Heart right ventricle (tissue), 16 donors: ENCODE measurements at regions of chr1 and their contacts with region 1.

Region 1: DNA sequence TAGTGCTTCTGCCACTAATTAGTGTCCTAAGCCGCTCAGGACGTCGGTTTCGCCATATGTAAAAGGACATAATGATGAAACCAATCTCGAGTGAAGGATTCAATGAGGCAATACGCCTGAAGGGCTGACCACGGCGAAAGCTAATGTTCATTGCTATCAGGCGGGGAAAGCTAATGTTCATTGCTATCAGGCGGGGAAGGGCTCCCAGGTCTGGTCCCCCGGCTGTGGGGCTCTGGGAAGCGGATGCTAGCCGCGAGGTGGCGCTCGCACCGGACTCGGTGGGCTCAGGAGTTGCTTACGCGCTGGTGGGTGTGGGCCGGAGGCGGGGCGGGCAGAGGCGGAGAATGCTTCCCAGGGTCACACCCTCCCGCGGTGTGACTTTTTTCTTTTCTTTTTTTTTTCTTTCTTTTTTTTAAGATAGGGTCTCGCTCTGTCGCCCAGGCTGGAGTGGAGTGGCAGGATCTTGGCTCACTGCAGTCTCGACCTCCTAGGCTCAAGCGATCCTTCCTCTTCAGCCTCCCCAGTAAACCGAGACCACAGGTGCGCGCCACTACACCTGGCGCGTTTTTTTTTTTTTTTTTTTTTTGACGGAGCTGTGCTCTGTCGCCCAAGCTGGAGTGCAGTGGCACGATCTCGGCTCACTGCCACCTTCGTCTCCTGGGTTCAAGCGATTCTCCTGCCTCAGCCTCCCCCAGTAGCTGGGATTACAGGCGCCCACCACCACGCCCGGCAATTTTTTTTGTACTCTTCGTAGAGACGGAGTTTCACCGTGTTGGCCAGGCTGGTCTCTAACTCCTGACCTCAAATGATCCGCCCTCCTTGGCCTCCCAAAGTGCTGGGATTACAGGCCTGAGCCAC is 1.1 kb upstream of the PEAR1 start:
- DNase-seq: peak; percentile 94 to 95
- ATAC-seq: peak; percentile 84 to 91 (median 88)
- H3K4me3 ChIP-seq: peak overlapping the region; percentile 10 to 82 (median 68)
- H3K27ac ChIP-seq: peak overlapping the region; percentile 9 to 98 (median 93)
- H3K4me1 ChIP-seq: peaks cover 12 to 56% (median 45%) of the 10 kb centered on the region in 9 donors
- H3K27me3 ChIP-seq: peaks cover 0 to 43% (median 9%) of the 10 kb centered on the region in 7 donors
- CTCF ChIP-seq: peak; percentile 82 to 98 (median 89)

Region 2: GRCh38 chr1:156659994-156660751 is 232.2 kb before region 1 on chr1:
- intact Hi-C with region 1: loop called in 1 of 10 experiments (anchors 10 kb)
- DNase-seq: peak; percentile 97 to 98
- ATAC-seq: peak; percentile 82 to 91 (median 85)
- H3K4me3 ChIP-seq: peak overlapping the region in 8 of 10 donors; percentile 18 to 46 (median 39)
- H3K27ac ChIP-seq: peak overlapping the region; percentile 68 to 99 (median 96)
- H3K4me1 ChIP-seq: peaks cover 54 to 85% (median 80%) of the 10 kb centered on the region in 9 donors
- H3K27me3 ChIP-seq: peaks cover 0 to 28% (median 18%) of the 10 kb centered on the region in 7 donors
- CTCF ChIP-seq: peak; percentile 93 to 100 (median 99)

Region 3: DNA sequence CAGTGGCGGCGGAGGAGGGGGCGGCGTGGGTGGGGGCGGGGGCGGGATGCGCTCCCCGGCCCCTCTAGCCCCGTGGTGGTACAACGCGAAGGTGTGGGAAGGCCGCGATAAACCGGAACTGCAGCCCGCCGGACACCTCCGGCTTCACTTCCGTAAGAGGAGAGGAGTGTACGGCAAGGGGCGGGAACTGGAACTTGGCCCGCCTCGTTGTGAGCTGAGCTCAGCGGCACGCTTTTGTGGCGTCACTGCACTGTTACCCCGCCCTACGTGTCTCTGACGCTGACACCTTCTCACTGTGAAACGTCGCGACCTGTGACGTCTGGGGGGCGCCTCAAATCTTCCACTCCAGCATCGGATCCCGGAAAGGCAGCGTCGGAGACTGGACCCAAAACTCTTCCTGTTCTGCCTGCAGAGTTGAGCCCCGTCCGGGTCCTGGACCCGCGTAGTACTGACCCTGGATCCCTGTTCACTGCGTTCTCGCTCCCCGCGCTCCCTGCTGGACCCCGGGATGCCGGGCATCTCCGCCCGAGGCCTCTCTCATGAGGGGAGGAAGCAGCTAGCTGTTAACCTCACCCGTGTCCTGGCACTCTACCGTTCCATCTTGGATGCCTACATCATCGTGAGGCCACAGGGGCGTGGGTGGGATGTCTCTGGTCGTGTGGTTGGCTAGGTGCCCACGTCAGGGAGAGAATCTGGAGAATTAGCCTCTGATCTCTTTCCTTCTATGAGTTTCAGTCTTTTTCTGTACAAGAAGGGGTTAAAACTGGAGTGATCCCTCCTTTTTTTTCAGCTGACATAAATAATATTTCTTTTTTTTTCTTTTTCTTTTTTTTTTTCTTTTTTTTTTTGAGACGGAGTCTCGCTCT is 163.6 kb before region 1 on chr1 and contains the start of gene ISG20L2:
- intact Hi-C with region 1: loop called in 6 of 10 experiments (anchors 2 to 10 kb)
- DNase-seq: peak; percentile 94 to 96
- ATAC-seq: peak; percentile 95 to 97 (median 96)
- H3K4me3 ChIP-seq: peak within 1 kb of the TSS; percentile 57 to 86 (median 78)
- H3K27ac ChIP-seq: peak within 1 kb of the TSS; percentile 92 to 98 (median 95)
- H3K4me1 ChIP-seq: peaks cover 21 to 52% (median 44%) of the 10 kb centered on the region in 9 donors
- H3K27me3 ChIP-seq: no peaks in the 10 kb centered on the region
- CTCF ChIP-seq: no peak
- total RNA-seq, gene ISG20L2: 10.5 to 17.5 (median 15.2) TPM

Region 4: GRCh38 chr1:156838981-156839410 is 53.4 kb before region 1 on chr1:
- intact Hi-C with region 1: loop called in 3 of 10 experiments (anchors 1 to 10 kb)
- DNase-seq: no peak
- ATAC-seq: peak; percentile 28 to 67 (median 49)
- H3K4me3 ChIP-seq: no peak overlapping the region
- H3K27ac ChIP-seq: no peak overlapping the region
- H3K4me1 ChIP-seq: peaks cover 0 to 5% (median 0%) of the 10 kb centered on the region in 9 donors
- H3K27me3 ChIP-seq: peaks cover 0 to 67% (median 45%) of the 10 kb centered on the region in 7 donors
- CTCF ChIP-seq: peak; percentile 68 to 90 (median 84)

Region 5: GRCh38 chr1:156927215-156928042 is 35.0 kb after region 1 on chr1:
- intact Hi-C with region 1: loop called in 1 of 10 experiments (anchors 5 kb)
- DNase-seq: peak; percentile 60 to 76
- ATAC-seq: peak; percentile 53 to 77 (median 70)
- H3K4me3 ChIP-seq: peak overlapping the region in 9 of 10 donors; percentile 14 to 48 (median 37)
- H3K27ac ChIP-seq: no peak overlapping the region
- H3K4me1 ChIP-seq: peaks cover 10 to 38% (median 32%) of the 10 kb centered on the region in 9 donors
- H3K27me3 ChIP-seq: peaks cover 23 to 78% (median 67%) of the 10 kb centered on the region in 7 donors
- CTCF ChIP-seq: peak; percentile 29 to 81 (median 63)